Posterior vena cava (tissue), 2 donors: ENCODE measurements at regions of chr13 and their contacts with region 1.

Region 1: DNA sequence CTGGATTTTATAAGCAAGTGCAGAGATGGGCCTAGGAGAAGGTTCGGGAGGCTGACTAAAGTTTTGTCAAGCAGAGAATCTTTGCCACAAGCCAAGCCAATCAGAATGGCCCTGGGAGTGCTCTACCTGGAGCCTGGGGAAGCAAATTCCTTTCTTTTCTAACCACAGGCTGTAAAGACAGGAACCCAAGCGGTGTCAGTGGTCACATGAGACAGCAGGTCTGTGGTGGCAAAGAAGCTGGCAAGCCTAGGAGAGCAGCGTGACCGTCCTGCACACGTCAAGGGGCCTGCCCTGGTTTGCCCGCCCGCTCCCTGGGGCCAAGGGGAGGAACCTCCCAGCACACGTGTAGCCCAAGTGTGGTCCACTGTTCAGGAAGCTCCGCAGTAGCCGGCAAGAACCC is 90.8 kb downstream of the IPO5 start:
- DNase-seq: no peak

Region 2: GRCh38 chr13:97521726-97522125 is 522.6 kb before region 1 on chr13:
- intact Hi-C with region 1: no loop called
- DNase-seq: no peak

Region 3: GRCh38 chr13:98054301-98054700 is 10.0 kb after region 1 on chr13:
- intact Hi-C with region 1: loop called in 1 of 2 experiments (anchors 1 kb)
- DNase-seq: no peak

Region 4: DNA sequence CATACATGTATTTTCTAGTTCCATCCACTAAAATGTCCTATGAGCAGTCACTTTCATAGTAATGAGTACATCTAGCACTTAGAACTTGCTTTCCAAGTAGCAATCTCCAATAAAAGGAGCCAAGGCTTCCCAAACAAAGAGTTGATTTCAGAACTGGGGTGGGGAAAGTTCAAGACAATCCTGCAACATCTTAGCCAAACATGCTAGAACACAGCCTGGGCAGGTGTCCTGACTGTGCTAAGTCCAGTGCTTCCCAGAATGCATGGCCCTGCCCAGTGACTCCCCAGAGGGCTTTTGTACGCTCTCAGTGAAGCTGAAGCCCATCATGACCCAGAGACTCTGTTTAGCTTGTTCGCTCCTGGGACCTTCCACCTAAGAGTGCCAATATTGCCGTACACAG is 1049.7 kb after region 1 on chr13:
- intact Hi-C with region 1: loop called in 1 of 2 experiments (anchors 5 kb)
- DNase-seq: no peak